ENCODE measurements at regions of chr3 and their contacts with region 1.

Region 1: GRCh38 chr3:157606011-157606851 is 103.0 kb upstream of the VEPH1 start:
- DNase-seq: no peak
- ATAC-seq: peak; percentile 97
- H3K4me3 ChIP-seq: no peak overlapping the region
- H3K27ac ChIP-seq: no peak overlapping the region
- H3K4me1 ChIP-seq: no peaks in the 10 kb centered on the region
- H3K27me3 ChIP-seq: peaks cover 0 to 3% of the 10 kb centered on the region in 2 experiments; a peak in 2 of 4 replicates
- CTCF ChIP-seq: peak; percentile 60 to 85 (median 84)
- EP300 ChIP-seq: no peak
- POLR2A ChIP-seq: no peak
- RAD21 ChIP-seq: peak; percentile 39; the same call in 1 of the 2 replicates

Region 2: GRCh38 chr3:157532529-157533297 is 73.5 kb before region 1 on chr3:
- CTCF ChIA-PET with region 1: interaction called, 13 read pairs
- POLR2A ChIA-PET with region 1: no interaction called
- RAD21 ChIA-PET with region 1: no interaction called
- SMC1A ChIA-PET with region 1: interaction called, 3 read pairs
- in situ Hi-C with region 1: no loop called
- intact Hi-C with region 1: no loop called
- DNase-seq: peak; percentile 9
- ATAC-seq: peak; percentile 95
- H3K4me3 ChIP-seq: no peak overlapping the region
- H3K27ac ChIP-seq: no peak overlapping the region
- H3K4me1 ChIP-seq: no peaks in the 10 kb centered on the region
- H3K27me3 ChIP-seq: no peaks in the 10 kb centered on the region
- CTCF ChIP-seq: peak; percentile 66 to 75 (median 70)
- EP300 ChIP-seq: no peak
- POLR2A ChIP-seq: no peak
- RAD21 ChIP-seq: peak; percentile 85

Region 3: GRCh38 chr3:157618075-157618760 is 12.0 kb after region 1 on chr3:
- CTCF ChIA-PET with region 1: interaction called, 10 read pairs
- POLR2A ChIA-PET with region 1: no interaction called
- RAD21 ChIA-PET with region 1: interaction called, 3 read pairs
- SMC1A ChIA-PET with region 1: interaction called, 4 read pairs
- in situ Hi-C with region 1: no loop called
- intact Hi-C with region 1: no loop called
- DNase-seq: peak; percentile 12
- ATAC-seq: peak; percentile 90
- H3K4me3 ChIP-seq: no peak overlapping the region
- H3K27ac ChIP-seq: no peak overlapping the region
- H3K4me1 ChIP-seq: no peaks in the 10 kb centered on the region
- H3K27me3 ChIP-seq: no peaks in the 10 kb centered on the region
- CTCF ChIP-seq: peak; percentile 55 to 62 (median 56); a peak in 5 of 6 replicates
- EP300 ChIP-seq: no peak
- POLR2A ChIP-seq: no peak
- RAD21 ChIP-seq: peak; percentile 68

Region 4: GRCh38 chr3:157713101-157713500 is 106.9 kb after region 1 on chr3:
- CTCF ChIA-PET with region 1: no interaction called
- POLR2A ChIA-PET with region 1: no interaction called
- RAD21 ChIA-PET with region 1: no interaction called
- SMC1A ChIA-PET with region 1: no interaction called
- in situ Hi-C with region 1: no loop called
- intact Hi-C with region 1: no loop called
- DNase-seq: no peak
- ATAC-seq: no peak
- H3K4me3 ChIP-seq: no peak overlapping the region
- H3K27ac ChIP-seq: no peak overlapping the region
- H3K4me1 ChIP-seq: no peaks in the 10 kb centered on the region
- H3K27me3 ChIP-seq: no peaks in the 10 kb centered on the region
- CTCF ChIP-seq: no peak
- EP300 ChIP-seq: no peak
- POLR2A ChIP-seq: no peak
- RAD21 ChIP-seq: no peak

Region 5: GRCh38 chr3:158074591-158074990 is 468.4 kb after region 1 on chr3:
- CTCF ChIA-PET with region 1: no interaction called
- POLR2A ChIA-PET with region 1: no interaction called
- RAD21 ChIA-PET with region 1: no interaction called
- SMC1A ChIA-PET with region 1: no interaction called
- in situ Hi-C with region 1: no loop called
- intact Hi-C with region 1: loop called (anchors 10 kb)
- DNase-seq: no peak
- ATAC-seq: no peak
- H3K4me3 ChIP-seq: no peak overlapping the region
- H3K27ac ChIP-seq: no peak overlapping the region
- H3K4me1 ChIP-seq: no peaks in the 10 kb centered on the region
- H3K27me3 ChIP-seq: no peaks in the 10 kb centered on the region
- CTCF ChIP-seq: no peak
- EP300 ChIP-seq: no peak
- POLR2A ChIP-seq: no peak
- RAD21 ChIP-seq: no peak

Region 6: DNA sequence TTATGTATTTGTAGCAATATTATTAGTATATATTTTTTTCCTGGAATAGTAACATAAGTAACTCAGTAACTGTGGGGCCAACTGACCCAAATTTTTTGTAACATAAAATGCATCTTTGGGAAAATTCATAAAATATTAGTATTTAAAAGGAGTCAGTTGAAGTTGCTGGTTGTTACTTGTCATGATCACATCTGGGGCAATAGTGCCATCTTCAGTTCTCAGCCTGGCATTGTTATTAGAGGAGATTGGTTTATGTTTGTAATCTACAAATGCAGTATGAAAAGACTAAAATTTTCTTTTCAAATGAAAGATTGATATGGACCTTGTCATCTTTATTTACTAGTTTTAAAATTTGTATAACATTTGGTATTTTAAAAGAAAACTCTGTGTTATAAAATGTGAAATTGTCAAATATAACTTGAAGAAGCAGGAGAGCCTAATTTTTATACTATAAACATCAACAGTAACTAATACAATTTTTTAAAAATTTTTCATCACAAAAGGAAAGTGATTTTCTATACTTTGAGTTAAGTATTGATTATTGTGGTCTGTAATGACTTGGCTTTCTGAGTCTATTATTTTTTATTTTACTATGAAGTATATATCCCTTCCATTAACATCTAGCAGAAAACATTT is 926.0 kb after region 1 on chr3:
- CTCF ChIA-PET with region 1: interaction called, 7 read pairs
- POLR2A ChIA-PET with region 1: no interaction called
- RAD21 ChIA-PET with region 1: interaction called, 3 read pairs
- SMC1A ChIA-PET with region 1: interaction called, 3 read pairs
- in situ Hi-C with region 1: no loop called
- intact Hi-C with region 1: loop called (anchors 1 kb)
- DNase-seq: no peak
- ATAC-seq: peak; percentile 62; the same call in 2 of the 3 replicates
- H3K4me3 ChIP-seq: no peak overlapping the region
- H3K27ac ChIP-seq: no peak overlapping the region
- H3K4me1 ChIP-seq: no peaks in the 10 kb centered on the region
- H3K27me3 ChIP-seq: no peaks in the 10 kb centered on the region
- CTCF ChIP-seq: peak; percentile 48 to 60 (median 49)
- EP300 ChIP-seq: no peak
- POLR2A ChIP-seq: no peak
- RAD21 ChIP-seq: peak; percentile 82

Region 7: DNA sequence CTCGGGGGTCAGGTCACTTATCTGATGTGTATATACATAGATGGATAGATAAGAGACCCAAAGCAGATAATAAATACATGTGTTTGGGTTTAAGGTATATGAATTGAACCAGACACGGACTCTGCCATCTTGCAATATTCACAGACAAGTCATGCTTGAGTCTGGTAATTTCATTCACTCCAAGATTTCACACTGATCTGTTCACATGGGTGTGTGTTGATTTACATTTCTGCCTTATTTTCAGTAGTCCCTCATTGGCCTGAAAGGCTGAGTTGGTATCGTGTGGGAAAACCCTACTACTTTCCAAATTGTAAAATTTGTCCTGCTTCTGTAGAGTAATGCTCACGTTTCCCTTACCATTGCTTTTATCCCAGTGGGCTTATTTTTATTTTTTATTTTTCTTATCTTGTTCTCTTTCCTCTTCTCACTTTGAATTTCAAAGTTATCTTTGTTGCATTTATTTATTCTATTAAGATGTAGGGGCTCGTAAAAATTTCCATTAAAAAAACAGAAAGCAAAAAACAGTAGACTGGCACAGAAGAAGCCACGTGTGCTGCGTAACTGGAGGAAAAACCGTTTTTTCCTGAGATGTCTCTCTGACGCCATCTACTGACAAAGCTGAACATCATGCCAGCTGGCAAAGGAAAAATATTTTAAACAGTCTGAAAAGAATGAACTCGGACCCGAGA is 1184.8 kb after region 1 on chr3:
- CTCF ChIA-PET with region 1: no interaction called
- POLR2A ChIA-PET with region 1: no interaction called
- RAD21 ChIA-PET with region 1: no interaction called
- SMC1A ChIA-PET with region 1: no interaction called
- in situ Hi-C with region 1: loop called (anchors 25 kb)
- intact Hi-C with region 1: loop called (anchors 10 kb)
- DNase-seq: no peak
- ATAC-seq: peak; percentile 87
- H3K4me3 ChIP-seq: no peak overlapping the region
- H3K27ac ChIP-seq: no peak overlapping the region
- H3K4me1 ChIP-seq: no peaks in the 10 kb centered on the region
- H3K27me3 ChIP-seq: no peaks in the 10 kb centered on the region; a peak in 1 of 4 replicates
- CTCF ChIP-seq: peak; percentile 79 to 88 (median 79)
- EP300 ChIP-seq: no peak
- POLR2A ChIP-seq: no peak
- RAD21 ChIP-seq: peak; percentile 92

Measured in GM12878 (cell line).